Activated T-helper 2 cell treated with anti-CD3 and anti-CD28 coated beads, Interferon-gamma antibody, Interleukin-2, Interleukin-4, amounts not matched to agents 10 μg/mL and 5 μg/mL and 100 μg/mL, durations not matched to agents 14 hours and 24 hours and 36 hours (primary cell): ENCODE measurements at regions of chr15 and their contacts with region 1.

Region 1: GRCh38 chr15:31391687-31392671 is 65.3 kb downstream of the KLF13 start:
- DNase-seq: peak; percentile 77
- H3K4me3 Mint-ChIP-seq: peak overlapping the region; percentile 87
- H3K27ac Mint-ChIP-seq: peak overlapping the region; percentile 82
- H3K4me1 Mint-ChIP-seq: peaks cover 43% of the 10 kb centered on the region
- H3K27me3 Mint-ChIP-seq: no peaks in the 10 kb centered on the region

Region 2: DNA sequence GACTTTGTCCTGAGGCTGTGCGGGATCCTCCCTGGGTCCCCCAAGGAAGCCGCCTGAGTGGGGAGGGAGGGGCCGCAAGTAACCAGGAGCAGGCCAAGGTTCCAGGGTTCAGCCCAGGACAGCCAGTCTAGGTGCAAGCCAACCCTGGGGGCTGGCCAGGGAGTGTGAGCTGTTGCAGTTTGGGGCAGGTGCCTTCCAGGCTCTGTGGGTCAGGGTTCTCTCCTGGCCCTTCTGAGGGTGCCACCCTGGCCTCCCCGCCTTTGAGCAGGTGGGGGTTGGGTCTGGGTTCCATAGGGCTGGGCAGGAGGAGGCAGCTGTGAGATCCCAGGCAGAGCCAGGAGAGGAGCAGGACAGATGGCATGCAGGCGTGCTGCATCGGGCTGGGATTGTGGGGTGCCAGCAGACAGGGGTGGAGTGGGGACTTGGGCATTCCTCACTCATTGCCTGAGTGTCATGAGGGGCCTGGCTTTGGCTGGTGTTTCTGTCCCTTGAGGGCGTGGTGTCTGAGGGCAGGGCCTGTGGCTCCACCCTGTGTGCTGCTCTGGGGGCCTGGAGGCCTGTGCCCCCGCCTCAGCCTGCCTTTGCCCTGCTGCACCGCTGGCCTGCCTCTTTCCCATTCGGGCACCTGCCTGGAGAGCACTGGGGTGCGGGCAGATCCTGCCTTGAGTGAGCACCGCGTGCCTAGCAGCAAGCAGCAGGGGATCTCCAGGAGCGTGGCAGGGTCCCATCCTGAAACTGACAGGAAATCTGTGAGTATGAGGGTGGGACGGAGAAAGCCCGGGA is 47.0 kb before region 1 on chr15:
- intact Hi-C with region 1: loop called (anchors 5 kb)
- DNase-seq: no peak
- H3K4me3 Mint-ChIP-seq: peak overlapping the region; percentile 82
- H3K27ac Mint-ChIP-seq: peak overlapping the region; percentile 97
- H3K4me1 Mint-ChIP-seq: peaks cover 87% of the 10 kb centered on the region
- H3K27me3 Mint-ChIP-seq: no peaks in the 10 kb centered on the region

Region 3: GRCh38 chr15:31365655-31366127 is 26.3 kb before region 1 on chr15:
- intact Hi-C with region 1: loop called (anchors 2 kb)
- DNase-seq: peak; percentile 72
- H3K4me3 Mint-ChIP-seq: peak overlapping the region; percentile 61
- H3K27ac Mint-ChIP-seq: peak overlapping the region; percentile 100
- H3K4me1 Mint-ChIP-seq: peaks cover 88% of the 10 kb centered on the region
- H3K27me3 Mint-ChIP-seq: no peaks in the 10 kb centered on the region

Region 4: GRCh38 chr15:31799715-31800321 is 407.8 kb after region 1 on chr15:
- intact Hi-C with region 1: loop called (anchors 5 kb)
- DNase-seq: no peak
- H3K4me3 Mint-ChIP-seq: no peak overlapping the region
- H3K27ac Mint-ChIP-seq: no peak overlapping the region
- H3K4me1 Mint-ChIP-seq: peaks cover 3% of the 10 kb centered on the region
- H3K27me3 Mint-ChIP-seq: no peaks in the 10 kb centered on the region